ENCODE measurements at regions of chr3 and their contacts with region 1.

Region 1: DNA sequence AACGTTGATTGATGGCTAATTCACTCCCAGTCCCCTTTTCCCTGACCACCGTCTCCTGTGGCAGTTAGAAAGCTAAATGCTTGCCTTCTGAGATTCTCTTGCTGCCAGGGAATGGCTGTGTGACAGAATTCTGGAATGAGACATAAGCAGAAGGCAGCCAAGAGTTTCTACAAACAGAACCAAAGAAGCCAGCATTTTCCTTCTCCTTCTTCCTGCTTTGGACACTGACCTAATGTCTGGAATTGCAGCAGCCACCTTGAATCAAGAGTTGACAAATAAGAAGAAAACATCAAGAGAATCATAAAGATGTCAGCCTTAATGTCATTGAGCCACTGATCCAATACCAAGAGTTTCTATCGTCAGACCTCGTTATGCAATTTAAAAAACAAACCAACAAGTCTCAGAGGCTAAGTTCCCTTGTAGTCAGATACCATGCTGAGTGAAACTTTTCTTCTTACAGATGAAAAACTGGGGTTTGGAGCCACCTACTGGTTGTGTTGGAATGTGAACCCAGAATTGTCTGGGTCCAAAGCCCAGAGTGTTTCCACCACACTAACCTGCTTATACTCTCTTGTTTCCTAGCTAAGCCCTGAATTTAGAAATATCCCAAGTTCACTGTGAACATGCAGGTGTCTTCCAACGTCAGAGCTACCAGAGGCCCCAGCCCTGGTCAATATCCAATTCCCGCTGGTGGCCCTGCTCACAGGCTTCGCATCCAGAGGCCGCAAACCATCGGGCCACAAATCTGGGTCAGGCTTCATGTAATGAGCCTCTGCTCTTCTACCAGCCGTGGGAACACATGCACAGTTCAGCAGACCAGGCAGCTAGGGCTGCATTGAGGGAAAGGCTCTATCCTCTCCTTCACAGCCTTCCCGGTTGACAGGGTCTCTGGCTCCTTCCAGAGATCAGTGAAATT is 42.5 kb downstream of the MCF2L2 start:
- ATAC-seq: peak; percentile 45 to 88 (median 72)
- H3K4me3 ChIP-seq: no peak overlapping the region
- H3K27ac ChIP-seq: no peak overlapping the region
- H3K4me1 ChIP-seq: no peaks in the 10 kb centered on the region

Region 2: GRCh38 chr3:183122257-183122932 is 263.6 kb before region 1 on chr3:
- in situ Hi-C with region 1: loop called in 6 of 9 experiments (anchors 10 to 25 kb)
- ATAC-seq: peak in 4 of 8 experiments; percentile 21 to 62 (median 54)
- H3K4me3 ChIP-seq: no peak overlapping the region
- H3K27ac ChIP-seq: no peak overlapping the region
- H3K4me1 ChIP-seq: no peaks in the 10 kb centered on the region

Region 3: DNA sequence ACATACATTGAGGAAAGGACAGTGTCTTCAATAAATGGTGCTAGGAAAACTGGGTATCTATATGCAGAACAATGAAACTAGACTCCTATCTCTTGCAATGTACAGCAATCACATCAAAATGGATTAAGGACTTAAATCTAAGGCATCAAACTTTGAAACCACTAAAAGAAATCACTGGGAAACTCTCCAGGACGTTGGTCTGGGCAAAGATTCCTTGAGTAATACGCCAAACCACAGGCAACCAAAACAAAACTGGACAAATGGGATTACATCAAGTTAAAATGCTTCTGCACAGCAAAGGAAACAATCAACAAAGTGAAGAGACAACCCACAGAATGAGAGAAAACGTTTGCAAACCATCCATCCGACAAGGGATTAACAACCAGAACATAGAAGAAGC is 237.9 kb before region 1 on chr3:
- in situ Hi-C with region 1: loop called in 2 of 9 experiments (anchors 25 kb)
- ATAC-seq: no peak
- H3K4me3 ChIP-seq: no peak overlapping the region
- H3K27ac ChIP-seq: no peak overlapping the region
- H3K4me1 ChIP-seq: no peaks in the 10 kb centered on the region

Region 4: GRCh38 chr3:183178629-183179549 is 207.1 kb before region 1 on chr3:
- in situ Hi-C with region 1: loop called in 2 of 9 experiments (anchors 10 to 25 kb)
- ATAC-seq: peak; percentile 71 to 81 (median 76)
- H3K4me3 ChIP-seq: peak overlapping the region; percentile 13 to 37 (median 31)
- H3K27ac ChIP-seq: no peak overlapping the region
- H3K4me1 ChIP-seq: peaks cover 7 to 15% of the 10 kb centered on the region in 2 donors

Region 5: DNA sequence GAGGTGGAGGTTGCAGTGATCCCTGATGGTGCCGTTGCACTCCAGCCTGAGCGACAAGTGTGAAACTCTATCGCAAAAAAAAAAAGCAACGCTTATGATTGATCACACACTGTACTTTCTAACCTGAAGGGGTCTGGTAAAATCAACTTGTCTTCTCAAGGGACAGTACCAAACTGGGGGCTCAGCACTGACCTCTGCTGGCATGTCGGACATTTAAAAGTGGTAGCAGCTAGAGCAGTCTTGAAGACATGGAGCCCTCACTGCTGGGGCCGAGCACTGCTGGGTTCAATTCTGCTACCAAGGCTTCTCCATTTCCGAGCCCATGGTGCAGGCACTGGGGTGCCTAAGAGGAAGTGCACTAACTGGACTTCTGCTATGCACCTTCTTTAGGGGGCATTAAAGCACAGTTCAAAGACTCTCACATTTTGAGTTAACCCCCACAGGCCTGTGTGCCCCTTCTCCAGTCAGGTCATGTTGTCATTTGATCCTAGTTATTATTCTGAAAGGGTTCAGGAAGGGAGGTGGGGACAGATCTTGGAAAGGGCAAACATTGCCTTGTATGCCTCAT is 197.0 kb before region 1 on chr3:
- in situ Hi-C with region 1: loop called in 3 of 9 experiments (anchors 5 to 25 kb)
- ATAC-seq: peak in 2 of 8 experiments; percentile 30 to 66
- H3K4me3 ChIP-seq: no peak overlapping the region
- H3K27ac ChIP-seq: no peak overlapping the region
- H3K4me1 ChIP-seq: peaks cover 0 to 5% of the 10 kb centered on the region in 2 donors

Region 6: DNA sequence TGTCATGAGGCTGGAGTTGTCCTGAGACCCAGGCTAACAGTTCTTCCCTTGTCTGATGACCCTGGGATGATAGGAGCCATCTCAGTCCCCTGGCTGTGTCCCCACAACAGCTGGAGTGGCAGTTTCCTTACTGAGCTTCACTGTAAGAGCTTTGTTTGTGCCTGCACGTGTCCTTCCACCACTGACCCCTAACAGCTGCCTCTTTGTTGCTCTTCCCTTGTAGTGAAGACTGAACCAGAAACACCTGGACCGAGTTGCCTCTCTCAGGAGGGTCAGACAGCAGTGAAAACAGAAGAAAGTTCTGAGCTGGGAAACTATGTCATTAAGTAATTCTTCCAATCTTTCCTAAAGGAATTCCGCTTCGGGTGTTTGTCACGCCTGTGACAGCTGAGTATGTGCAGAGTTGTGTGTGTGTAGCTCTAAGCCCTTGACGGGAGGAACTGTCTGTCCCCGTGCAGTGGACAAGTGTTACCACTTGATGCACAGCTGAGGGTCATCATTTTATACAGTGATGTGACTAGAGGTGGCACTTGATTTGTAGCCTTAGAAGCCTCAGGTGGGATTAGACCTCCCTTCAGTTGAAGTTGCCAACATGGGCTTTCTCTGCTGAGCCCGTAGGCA is 414.4 kb after region 1 on chr3:
- in situ Hi-C with region 1: no loop called
- ATAC-seq: no peak
- H3K4me3 ChIP-seq: no peak overlapping the region
- H3K27ac ChIP-seq: no peak overlapping the region
- H3K4me1 ChIP-seq: no peaks in the 10 kb centered on the region